Sigmoid colon (tissue), 7 donors: ENCODE measurements at regions of chr9 and their contacts with region 1.

Region 1: DNA sequence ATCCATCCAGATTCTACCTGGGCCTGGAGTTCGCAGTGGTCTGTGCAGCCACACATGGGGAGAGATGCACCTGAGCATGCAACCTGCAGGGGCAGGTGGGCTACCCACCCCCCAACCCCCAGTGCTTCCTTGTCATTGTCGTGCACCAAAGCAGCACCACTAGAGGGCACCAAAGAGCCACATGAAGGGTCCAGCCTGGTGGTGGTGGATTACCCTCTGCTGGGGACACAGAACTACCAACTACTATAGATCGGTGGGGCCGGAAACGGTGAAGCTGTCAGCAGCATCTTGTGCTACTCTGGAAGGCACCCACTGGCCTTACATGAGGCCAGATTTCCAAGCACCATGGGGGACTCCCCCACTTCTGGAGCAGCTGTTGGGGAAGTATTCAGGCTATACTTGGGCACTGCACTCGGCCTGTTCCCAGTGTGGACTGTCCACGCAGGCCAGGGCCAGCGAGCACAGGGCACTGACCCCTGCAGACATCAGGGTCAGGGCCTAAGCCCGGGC is 60.2 kb upstream of the TBC1D2 start:
- DNase-seq: peak; percentile 76
- H3K4me3 ChIP-seq: no peak overlapping the region
- H3K27ac ChIP-seq: no peak overlapping the region
- H3K4me1 ChIP-seq: no peaks in the 10 kb centered on the region
- H3K27me3 ChIP-seq: no peaks in the 10 kb centered on the region
- CTCF ChIP-seq: peak; percentile 48 to 91 (median 80)
- EP300 ChIP-seq: no peak
- POLR2A ChIP-seq: no peak

Region 2: DNA sequence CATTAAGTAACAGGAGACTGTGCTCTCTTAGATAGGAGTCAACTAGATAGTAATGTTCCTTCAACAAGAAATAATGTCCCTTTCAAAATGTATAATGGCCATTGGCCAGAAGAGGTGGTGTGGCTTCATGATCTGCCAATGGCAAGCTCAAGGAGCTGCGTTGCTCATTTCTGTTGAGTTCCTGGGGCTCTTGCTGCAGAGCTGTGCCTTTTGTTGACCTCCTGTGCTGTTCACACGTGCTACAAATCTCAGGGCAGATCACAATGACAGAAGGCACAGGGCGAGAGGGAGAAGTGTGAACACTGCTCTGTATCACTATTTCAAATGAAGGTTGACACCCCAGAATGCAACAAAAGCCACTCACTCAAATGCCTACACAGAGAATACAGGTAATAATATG is 44.1 kb before region 1 on chr9:
- intact Hi-C with region 1: no loop called
- DNase-seq: no peak
- H3K4me3 ChIP-seq: no peak overlapping the region
- H3K27ac ChIP-seq: no peak overlapping the region
- H3K4me1 ChIP-seq: no peaks in the 10 kb centered on the region
- H3K27me3 ChIP-seq: peaks cover 0 to 8% (median 0%) of the 10 kb centered on the region in 3 donors
- CTCF ChIP-seq: no peak
- EP300 ChIP-seq: no peak
- POLR2A ChIP-seq: no peak

Region 3: DNA sequence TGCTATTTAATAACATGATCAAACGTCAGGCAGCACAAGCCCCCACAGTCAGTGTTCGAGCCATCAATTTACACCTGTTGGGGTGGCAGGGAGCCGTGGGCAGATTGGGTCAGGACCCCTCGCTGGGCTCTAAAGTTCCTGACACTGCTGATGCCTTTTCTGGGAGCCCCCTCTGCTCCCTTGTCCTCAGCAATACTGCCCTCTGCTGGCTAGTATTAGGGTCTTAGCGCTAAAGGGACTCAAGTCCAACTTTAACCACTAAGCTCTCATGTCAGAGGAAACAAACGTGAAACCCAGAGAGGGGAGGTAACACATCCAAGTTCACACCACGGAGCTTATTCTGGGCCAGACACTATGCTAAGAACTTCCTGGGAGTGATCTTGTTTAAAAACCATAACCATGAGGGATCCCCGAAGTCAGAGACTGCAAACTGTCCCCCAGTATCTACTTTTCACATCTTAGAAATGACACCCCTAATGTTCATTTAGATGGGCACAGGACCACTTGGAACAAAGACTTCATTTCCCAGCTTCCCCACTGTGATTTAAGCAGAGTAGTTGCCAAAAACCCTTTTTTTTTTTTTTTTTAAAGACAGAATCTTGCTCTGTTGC is 460.3 kb after region 1 on chr9:
- intact Hi-C with region 1: loop called (anchors 1 kb)
- DNase-seq: no peak
- H3K4me3 ChIP-seq: no peak overlapping the region
- H3K27ac ChIP-seq: no peak overlapping the region
- H3K4me1 ChIP-seq: no peaks in the 10 kb centered on the region
- H3K27me3 ChIP-seq: no peaks in the 10 kb centered on the region
- CTCF ChIP-seq: peak; percentile 23 to 64 (median 45)
- EP300 ChIP-seq: no peak
- POLR2A ChIP-seq: no peak